ENCODE measurements at regions of chr5 and their contacts with region 1.

Region 1: DNA sequence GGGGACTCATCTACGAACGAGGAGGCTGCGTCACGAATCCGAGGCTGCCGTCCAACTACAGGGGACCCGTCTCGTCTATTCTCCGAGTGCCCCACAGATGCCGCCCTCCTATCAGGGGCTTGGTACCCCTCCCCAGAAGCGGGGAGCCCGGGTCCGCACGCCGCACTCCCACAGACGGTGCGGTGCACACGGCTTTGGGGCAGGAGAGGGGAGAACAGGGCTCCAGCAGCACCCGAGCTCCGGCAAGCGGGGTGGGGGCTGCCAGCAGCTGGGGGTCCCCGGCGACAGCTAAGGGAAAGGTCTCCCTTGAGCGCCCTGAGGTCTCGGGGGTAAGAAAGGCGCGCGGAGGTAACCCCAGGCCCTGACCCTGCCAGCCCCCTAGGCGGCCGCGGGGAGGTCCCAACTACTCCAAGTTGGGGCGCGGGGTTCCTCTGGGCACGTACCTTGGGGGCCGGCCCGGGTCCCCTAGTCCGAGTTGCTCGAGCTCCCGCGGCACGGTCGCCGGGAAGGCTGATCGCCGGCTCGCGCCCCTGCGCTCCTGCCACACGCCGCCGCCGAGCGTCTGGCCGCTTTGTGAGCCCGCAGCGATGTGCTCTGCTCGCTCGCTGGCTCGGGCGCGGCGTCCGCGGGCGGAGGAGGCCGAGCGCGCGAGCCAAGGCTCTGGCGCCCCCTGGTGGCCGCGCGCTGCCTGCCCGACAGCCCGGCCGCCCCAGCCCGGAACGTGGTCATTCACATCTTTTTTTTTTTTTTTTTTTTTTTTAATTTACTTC is at the start of gene SPOCK1:
- DNase-seq: peak; percentile 87
- H3K4me3 ChIP-seq: peak within 1 kb of the TSS in 7 of 8 donors; percentile 20 to 63 (median 34)
- H3K27ac ChIP-seq: no peak within 1 kb of the TSS
- H3K4me1 ChIP-seq: peaks cover 0 to 11% (median 7%) of the 10 kb centered on the region in 6 donors
- H3K27me3 ChIP-seq: peaks cover 0 to 58% (median 25%) of the 10 kb centered on the region in 7 donors
- CTCF ChIP-seq: peak in 9 of 11 experiments; percentile 20 to 85 (median 77)
- POLR2A ChIP-seq: no peak
- total RNA-seq, gene SPOCK1: 3.7 to 17.0 (median 7.3) TPM

Region 2: DNA sequence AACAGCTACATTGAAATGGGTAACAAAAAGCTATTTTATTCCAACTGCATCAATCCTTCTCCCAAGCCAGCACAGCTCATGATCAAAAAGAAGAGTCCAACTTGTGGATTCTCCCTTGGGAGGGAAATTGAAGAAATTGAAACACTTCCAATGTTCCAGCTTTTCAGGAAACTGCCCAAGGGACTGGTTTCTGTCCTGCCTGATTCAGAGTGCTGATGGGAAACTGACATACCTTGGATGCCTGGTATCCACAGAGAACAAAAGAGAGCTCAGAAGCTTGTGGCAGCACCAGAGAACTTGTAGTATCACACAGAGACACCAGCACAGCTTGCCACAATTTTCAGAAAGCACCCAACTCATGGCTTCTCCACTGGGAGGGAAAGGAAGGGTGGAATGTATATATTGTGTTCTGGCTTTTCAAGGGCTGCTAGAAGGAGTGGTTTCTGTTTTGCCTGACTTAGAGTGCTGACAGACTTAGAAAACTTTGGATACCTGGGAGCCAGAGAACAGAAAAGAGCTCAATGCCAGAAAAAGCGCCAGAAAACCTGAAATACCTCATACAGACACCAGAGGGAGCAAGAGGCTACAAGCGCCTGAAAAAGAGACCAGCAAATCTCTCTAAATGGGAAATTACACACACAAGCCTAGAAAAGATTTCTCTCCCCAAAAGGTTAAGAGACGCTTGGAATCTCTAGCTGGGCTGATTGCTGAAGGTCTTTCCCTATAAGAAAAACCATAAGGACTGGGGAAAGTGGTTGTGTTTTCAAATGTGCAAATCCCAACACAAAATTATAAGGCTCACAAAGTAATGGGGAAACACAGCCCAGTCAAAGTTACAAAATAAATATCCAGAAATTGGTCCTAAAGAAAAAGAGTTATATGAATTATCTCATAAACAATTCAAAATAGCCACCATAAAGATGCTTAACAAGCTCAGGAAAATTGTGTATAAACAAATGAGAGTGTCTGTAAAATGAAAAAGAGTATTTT is 178.6 kb before region 1 on chr5:
- intact Hi-C with region 1: loop called (anchors 5 kb)
- DNase-seq: no peak
- H3K4me3 ChIP-seq: no peak overlapping the region
- H3K27ac ChIP-seq: no peak overlapping the region
- H3K4me1 ChIP-seq: no peaks in the 10 kb centered on the region
- H3K27me3 ChIP-seq: peaks cover 0 to 20% (median 0%) of the 10 kb centered on the region in 7 donors
- CTCF ChIP-seq: peak; percentile 13 to 77 (median 61)
- POLR2A ChIP-seq: no peak

Measured in spleen (tissue), 13 donors.